OCI-LY7 (cell line): ENCODE measurements at regions of chr15 and their contacts with region 1.

Region 1: DNA sequence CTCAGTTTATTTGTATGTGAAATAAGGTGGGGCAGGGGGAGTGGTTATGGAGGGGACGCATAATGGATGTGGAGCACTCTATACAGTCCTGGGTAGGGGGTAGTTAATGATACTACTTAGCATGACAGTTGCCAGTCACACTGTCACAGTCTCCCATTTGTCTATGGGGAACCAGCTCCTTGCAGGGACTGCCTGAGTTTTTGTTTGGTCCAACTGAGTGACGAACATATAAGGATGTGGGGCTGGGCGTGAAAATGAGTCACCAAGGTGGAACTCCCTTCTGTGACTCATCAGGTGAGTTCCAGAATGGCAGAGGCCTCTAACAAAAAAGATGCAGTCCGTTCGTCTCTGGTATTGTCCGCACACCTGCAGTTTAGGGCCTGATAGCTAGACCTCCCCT is 235.2 kb upstream of the ST8SIA2 start:
- DNase-seq: no peak
- H3K4me3 ChIP-seq: no peak overlapping the region
- H3K27ac ChIP-seq: no peak overlapping the region
- H3K4me1 ChIP-seq: peaks cover 15% of the 10 kb centered on the region
- CTCF ChIP-seq: no peak

Region 2: GRCh38 chr15:92146511-92147150 is 11.8 kb before region 1 on chr15:
- CTCF ChIA-PET with region 1: no interaction called
- POLR2A ChIA-PET with region 1: interaction called, 11 read pairs
- intact Hi-C with region 1: no loop called
- DNase-seq: no peak
- H3K4me3 ChIP-seq: no peak overlapping the region
- H3K27ac ChIP-seq: no peak overlapping the region
- H3K4me1 ChIP-seq: peaks cover 19% of the 10 kb centered on the region
- CTCF ChIP-seq: no peak

Region 3: DNA sequence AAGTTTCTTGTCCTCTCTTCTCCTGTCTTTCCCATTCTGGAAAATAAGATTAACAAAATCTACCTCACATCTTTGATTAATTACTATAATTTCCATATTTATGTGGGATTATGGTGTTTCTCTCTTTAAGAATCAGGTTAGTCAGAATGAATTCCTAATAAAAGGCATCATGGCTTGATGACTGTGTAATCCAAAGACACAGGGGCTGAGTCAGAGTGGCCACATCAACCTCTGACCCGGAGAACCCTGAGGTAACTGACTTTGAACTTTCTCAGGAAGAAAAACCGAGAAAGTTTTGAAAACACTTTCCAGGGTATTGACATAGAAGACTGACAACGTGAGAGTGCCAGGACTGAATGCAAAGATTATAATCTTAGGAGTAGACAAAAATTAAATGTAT is 1902.6 kb after region 1 on chr15:
- CTCF ChIA-PET with region 1: no interaction called
- POLR2A ChIA-PET with region 1: interaction called, 10 read pairs
- intact Hi-C with region 1: no loop called
- DNase-seq: no peak
- H3K4me3 ChIP-seq: no peak overlapping the region
- H3K27ac ChIP-seq: no peak overlapping the region
- H3K4me1 ChIP-seq: no peaks in the 10 kb centered on the region
- CTCF ChIP-seq: no peak